ENCODE measurements at regions of chr3 and their contacts with region 1.

Region 1: GRCh38 chr3:46449755-46450552 is 14.8 kb downstream of the LTF start:
- DNase-seq: no peak
- ATAC-seq: 0 out of 3 replicates have a peak, but pooled peaks have one; percentile 41
- H3K4me3 ChIP-seq: no peak overlapping the region
- H3K27ac ChIP-seq: no peak overlapping the region
- H3K4me1 ChIP-seq: no peaks in the 10 kb centered on the region
- H3K27me3 ChIP-seq: peaks cover 2 to 6% of the 10 kb centered on the region in 2 experiments; a peak in 2 of 4 replicates
- CTCF ChIP-seq: peak; percentile 31 to 66 (median 63)
- EP300 ChIP-seq: no peak
- POLR2A ChIP-seq: no peak
- RAD21 ChIP-seq: no peak

Region 2: DNA sequence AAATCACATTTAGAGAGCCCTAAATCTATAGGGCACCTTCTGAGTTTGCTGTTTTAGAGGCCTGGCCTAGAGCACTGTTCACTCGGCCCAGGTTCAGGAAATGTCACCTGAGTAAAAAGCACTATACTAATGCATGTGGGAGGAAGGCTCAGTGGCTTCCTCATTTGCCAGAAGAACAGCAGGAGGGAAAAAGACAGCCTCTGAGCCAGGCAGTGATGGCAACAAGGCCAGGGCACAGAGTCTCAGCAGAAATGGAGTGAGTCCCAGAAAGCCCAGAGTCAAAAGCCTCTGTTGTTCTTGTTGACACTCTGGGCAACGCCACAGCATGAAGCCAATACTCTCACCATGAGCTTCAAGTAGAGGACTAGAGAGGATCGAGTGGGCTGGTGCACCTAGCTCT is 11.1 kb before region 1 on chr3:
- CTCF ChIA-PET with region 1: interaction called, 11 read pairs
- POLR2A ChIA-PET with region 1: no interaction called
- RAD21 ChIA-PET with region 1: no interaction called
- SMC1A ChIA-PET with region 1: no interaction called
- in situ Hi-C with region 1: no loop called
- intact Hi-C with region 1: no loop called
- DNase-seq: no peak
- ATAC-seq: no peak
- H3K4me3 ChIP-seq: no peak overlapping the region
- H3K27ac ChIP-seq: no peak overlapping the region
- H3K4me1 ChIP-seq: peaks cover 5% of the 10 kb centered on the region
- H3K27me3 ChIP-seq: no peaks in the 10 kb centered on the region; a peak in 1 of 4 replicates
- CTCF ChIP-seq: no peak
- EP300 ChIP-seq: no peak
- POLR2A ChIP-seq: no peak
- RAD21 ChIP-seq: no peak

Region 3: GRCh38 chr3:46469680-46470357 is 19.9 kb after region 1 on chr3:
- CTCF ChIA-PET with region 1: interaction called, 10 read pairs
- POLR2A ChIA-PET with region 1: no interaction called
- RAD21 ChIA-PET with region 1: no interaction called
- SMC1A ChIA-PET with region 1: no interaction called
- in situ Hi-C with region 1: no loop called
- intact Hi-C with region 1: no loop called
- DNase-seq: no peak
- ATAC-seq: no peak
- H3K4me3 ChIP-seq: no peak overlapping the region
- H3K27ac ChIP-seq: no peak overlapping the region
- H3K4me1 ChIP-seq: no peaks in the 10 kb centered on the region
- H3K27me3 ChIP-seq: peaks cover 1 to 5% of the 10 kb centered on the region in 2 experiments; a peak in 2 of 4 replicates
- CTCF ChIP-seq: no peak
- EP300 ChIP-seq: no peak
- POLR2A ChIP-seq: no peak
- RAD21 ChIP-seq: no peak